Sciatic nerve (tissue), 2 donors: ENCODE measurements at regions of chr15 and their contacts with region 1.

Region 1: GRCh38 chr15:81265944-81266775 is 57.8 kb downstream of the STARD5 start:
- DNase-seq: peak; percentile 92
- ATAC-seq: peak; percentile 94

Region 2: GRCh38 chr15:81029414-81030300 is 236.5 kb before region 1 on chr15:
- intact Hi-C with region 1: no loop called
- DNase-seq: no peak
- ATAC-seq: no peak

Region 3: GRCh38 chr15:81105545-81105944 is 160.6 kb before region 1 on chr15:
- intact Hi-C with region 1: loop called (anchors 2 kb)
- DNase-seq: no peak
- ATAC-seq: no peak

Region 4: DNA sequence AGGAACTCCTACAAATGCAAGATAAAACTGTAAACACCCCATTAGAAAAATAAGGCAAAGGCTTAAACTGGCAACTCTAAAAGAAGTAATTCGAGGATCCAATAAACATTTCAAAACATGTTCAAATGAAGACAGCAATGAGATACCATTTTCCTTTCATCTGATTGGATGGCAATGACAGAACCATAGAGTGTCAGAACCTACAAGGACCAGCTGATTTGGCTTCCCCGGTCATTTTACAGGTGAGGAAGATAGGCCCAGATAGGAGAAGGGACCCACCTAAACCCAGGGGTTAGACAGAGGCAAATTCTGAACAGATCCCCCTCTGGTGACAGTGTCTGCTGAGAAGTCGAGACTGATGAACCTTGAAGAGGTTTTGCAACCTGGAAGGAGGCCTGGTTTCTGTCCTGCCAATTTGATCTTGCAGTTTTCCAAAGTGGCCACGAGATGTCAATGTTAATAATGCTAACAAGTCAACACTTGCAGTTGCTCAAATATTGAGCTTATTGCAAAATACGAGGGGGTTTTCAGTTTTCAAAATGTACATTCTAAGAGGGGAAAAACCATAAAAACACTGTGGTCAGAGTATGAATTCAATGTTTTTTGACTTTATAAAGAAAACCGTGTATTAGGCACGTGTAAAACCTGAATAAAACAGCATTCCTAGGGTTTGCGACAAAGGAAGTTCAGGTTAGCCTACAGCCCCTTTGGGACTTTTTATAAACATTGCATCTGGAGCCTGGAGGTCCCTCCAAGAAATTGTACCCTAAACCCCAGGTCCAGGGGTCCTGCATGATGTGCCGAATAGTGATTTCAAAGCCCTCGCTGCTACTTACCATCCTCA is 110.6 kb before region 1 on chr15:
- intact Hi-C with region 1: loop called (anchors 5 kb)
- DNase-seq: no peak
- ATAC-seq: peak; percentile 62